H1 (cell line): ENCODE measurements at regions of chr6 and their contacts with region 1.

Region 1: GRCh38 chr6:32838114-32838958 is at the start of gene TAP2:
- DNase-seq: peak in 1 of 2 experiments; percentile 99
- H3K4me3 ChIP-seq: peak within 1 kb of the TSS; percentile 53 to 81 (median 68)
- H3K27ac ChIP-seq: no peak within 1 kb of the TSS
- H3K4me1 ChIP-seq: peaks cover 0 to 7% (median 4%) of the 10 kb centered on the region in 4 experiments; a peak in 5 of 7 replicates
- H3K27me3 ChIP-seq: peaks cover 0 to 7% (median 6%) of the 10 kb centered on the region in 4 experiments; a peak in 4 of 7 replicates
- CTCF ChIP-seq: peak; percentile 70 to 97 (median 95)
- EP300 ChIP-seq: no peak
- POLR2A ChIP-seq: peak in 1 of 2 experiments; percentile 62; a peak in 1 of 3 replicates
- RAD21 ChIP-seq: peak; percentile 92 to 94
- total RNA-seq, gene TAP2: 24.3 and 27.2 TPM in 2 replicates

Region 2: GRCh38 chr6:31197559-31198305 is 1640.6 kb before region 1 on chr6:
- CTCF ChIA-PET with region 1: no interaction called
- POLR2A ChIA-PET with region 1: no interaction called
- DNase-seq: peak in 1 of 2 experiments; percentile 73
- H3K4me3 ChIP-seq: peak overlapping the region; percentile 43 to 74 (median 70)
- H3K27ac ChIP-seq: no peak overlapping the region
- H3K4me1 ChIP-seq: peaks cover 0 to 6% (median 5%) of the 10 kb centered on the region in 4 experiments; a peak in 6 of 7 replicates
- H3K27me3 ChIP-seq: no peaks in the 10 kb centered on the region
- CTCF ChIP-seq: peak in 1 of 3 experiments; percentile 3; a peak in 1 of 4 replicates
- EP300 ChIP-seq: no peak
- POLR2A ChIP-seq: no peak
- RAD21 ChIP-seq: peak; percentile 1 to 11; a peak in 1 of 4 replicates

Region 3: DNA sequence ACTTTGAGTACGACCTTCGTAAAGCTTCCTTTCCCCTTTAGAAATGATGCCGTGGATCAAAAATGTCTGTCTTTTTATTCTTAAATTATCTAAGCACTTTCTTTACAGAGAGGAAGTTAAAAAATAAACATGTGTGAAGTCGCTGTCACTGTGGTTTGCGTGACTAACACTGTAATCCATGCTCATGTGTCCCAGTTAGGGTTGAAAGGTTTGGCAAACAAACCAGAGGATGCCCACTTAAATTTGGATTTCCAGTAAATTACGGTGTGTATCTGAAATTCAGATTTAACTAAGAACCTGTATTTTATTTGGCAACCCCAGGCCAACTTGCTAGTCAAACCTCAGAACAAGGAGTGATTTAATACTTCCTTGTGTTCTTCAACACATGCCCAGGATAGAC is 269.8 kb before region 1 on chr6:
- CTCF ChIA-PET with region 1: no interaction called
- POLR2A ChIA-PET with region 1: no interaction called
- DNase-seq: no peak
- H3K4me3 ChIP-seq: no peak overlapping the region
- H3K27ac ChIP-seq: no peak overlapping the region
- H3K4me1 ChIP-seq: no peaks in the 10 kb centered on the region
- H3K27me3 ChIP-seq: no peaks in the 10 kb centered on the region
- CTCF ChIP-seq: no peak
- EP300 ChIP-seq: no peak
- POLR2A ChIP-seq: no peak
- RAD21 ChIP-seq: no peak

Region 4: GRCh38 chr6:32785781-32786533 is 52.4 kb before region 1 on chr6:
- CTCF ChIA-PET with region 1: interaction called, 13 read pairs
- POLR2A ChIA-PET with region 1: no interaction called
- DNase-seq: peak in 1 of 2 experiments; percentile 49
- H3K4me3 ChIP-seq: no peak overlapping the region
- H3K27ac ChIP-seq: no peak overlapping the region
- H3K4me1 ChIP-seq: no peaks in the 10 kb centered on the region; a peak in 1 of 7 replicates
- H3K27me3 ChIP-seq: no peaks in the 10 kb centered on the region
- CTCF ChIP-seq: peak; percentile 15 to 75 (median 66)
- EP300 ChIP-seq: no peak
- POLR2A ChIP-seq: no peak
- RAD21 ChIP-seq: peak; percentile 86 to 88

Region 5: DNA sequence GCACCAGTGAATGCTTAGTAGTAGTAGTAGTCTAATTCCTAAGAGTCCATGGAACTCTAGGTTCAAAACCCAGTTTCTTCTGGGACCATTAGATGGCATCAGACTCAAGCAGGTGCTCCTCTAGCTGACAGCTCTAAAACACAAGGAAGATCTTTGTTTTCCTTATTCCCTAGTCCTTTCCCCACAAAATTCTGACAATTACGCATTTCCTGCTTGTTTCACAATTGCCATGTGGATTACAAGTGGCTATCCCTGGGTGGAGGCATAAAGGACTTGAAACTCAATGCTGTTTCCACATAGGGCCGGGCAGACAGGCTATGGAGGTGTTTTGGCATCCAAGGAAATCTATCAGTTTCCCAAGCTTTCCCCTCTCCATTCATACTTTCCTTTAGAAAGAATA is 12.4 kb before region 1 on chr6:
- CTCF ChIA-PET with region 1: interaction called, 37 read pairs
- POLR2A ChIA-PET with region 1: interaction called, 21 read pairs
- DNase-seq: no peak
- H3K4me3 ChIP-seq: no peak overlapping the region
- H3K27ac ChIP-seq: no peak overlapping the region
- H3K4me1 ChIP-seq: peaks cover 0 to 4% (median 0%) of the 10 kb centered on the region in 4 experiments; a peak in 1 of 7 replicates
- H3K27me3 ChIP-seq: no peaks in the 10 kb centered on the region; a peak in 1 of 7 replicates
- CTCF ChIP-seq: peak in 2 of 3 experiments; percentile 56 to 63; a peak in 3 of 4 replicates
- EP300 ChIP-seq: no peak
- POLR2A ChIP-seq: no peak
- RAD21 ChIP-seq: peak; percentile 73 to 83

Region 6: DNA sequence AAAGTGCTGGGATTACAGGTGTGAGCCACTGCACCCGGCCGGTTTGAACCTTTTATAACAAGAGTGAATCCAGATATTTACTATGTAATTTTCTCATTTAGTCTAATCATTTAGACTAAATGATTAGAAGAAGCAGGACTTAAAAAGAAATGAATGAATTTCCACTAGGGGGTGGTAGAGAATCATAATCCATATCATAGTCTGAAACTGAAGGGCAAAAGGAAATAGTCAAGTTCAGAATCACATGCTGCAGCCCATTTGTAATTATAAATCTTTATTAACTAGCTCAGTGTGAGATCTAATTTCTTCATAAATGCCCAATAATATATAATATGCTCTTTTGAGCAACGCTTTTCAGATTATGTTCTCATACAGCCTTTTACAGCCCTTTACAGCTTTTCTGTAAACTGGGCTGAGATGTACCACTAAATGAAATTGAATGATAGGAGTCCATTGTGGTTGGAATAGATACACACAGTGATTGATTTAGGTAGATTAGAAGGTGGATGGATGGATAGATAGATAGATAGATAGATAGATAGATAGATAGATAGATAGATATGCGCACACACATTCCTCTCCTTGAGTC is 47.5 kb after region 1 on chr6:
- CTCF ChIA-PET with region 1: interaction called, 12 read pairs
- POLR2A ChIA-PET with region 1: no interaction called
- DNase-seq: no peak
- H3K4me3 ChIP-seq: no peak overlapping the region
- H3K27ac ChIP-seq: no peak overlapping the region
- H3K4me1 ChIP-seq: no peaks in the 10 kb centered on the region
- H3K27me3 ChIP-seq: no peaks in the 10 kb centered on the region
- CTCF ChIP-seq: peak in 2 of 3 experiments; percentile 25 to 38; a peak in 2 of 4 replicates
- EP300 ChIP-seq: no peak
- POLR2A ChIP-seq: no peak
- RAD21 ChIP-seq: peak; percentile 63 to 67

Region 7: DNA sequence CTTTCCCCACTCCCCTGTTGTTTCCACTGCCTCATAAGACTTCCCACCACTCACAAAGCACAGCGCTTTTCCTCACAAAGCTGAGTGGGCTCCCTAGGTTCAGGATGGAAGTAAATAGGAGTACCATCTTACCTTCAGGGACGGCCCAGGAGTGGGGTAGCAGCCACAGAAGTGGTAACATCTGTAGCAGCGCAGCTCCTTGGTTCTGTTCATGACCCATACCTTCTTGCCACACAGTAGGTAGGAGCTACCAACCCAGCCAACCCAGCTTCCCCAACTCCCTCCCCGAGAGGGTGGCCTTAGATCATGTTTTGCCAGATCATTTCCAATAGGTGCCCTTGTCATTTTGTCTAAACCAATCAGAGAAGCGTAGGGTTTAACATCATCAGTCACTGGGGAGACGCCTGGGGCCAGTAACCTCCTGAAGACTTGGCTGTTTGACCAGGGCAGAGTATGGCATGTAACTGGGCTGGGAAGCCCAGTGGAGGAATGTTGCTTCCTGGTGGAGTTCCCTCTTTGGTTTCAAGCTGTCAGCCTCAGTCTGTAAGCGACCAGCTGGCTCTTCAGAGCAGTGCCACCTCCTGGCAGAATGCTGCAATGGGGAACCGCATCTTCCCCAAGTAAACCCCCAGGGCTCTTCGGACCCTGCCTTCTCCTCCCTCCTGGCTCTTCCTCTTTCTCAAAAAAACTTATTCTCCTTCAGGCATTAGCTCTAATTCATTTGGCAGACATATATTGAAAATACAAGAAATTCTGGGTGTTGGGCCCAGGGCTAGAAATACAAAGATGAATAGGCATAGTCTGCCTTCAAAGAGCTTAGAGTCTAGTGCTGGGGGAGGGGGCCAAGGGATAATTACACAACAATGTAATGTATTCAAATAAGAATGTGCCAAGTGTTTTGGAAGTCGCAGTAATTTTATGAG is 114.7 kb after region 1 on chr6 and contains the start of gene HLA-DMA:
- CTCF ChIA-PET with region 1: interaction called, 28 read pairs
- POLR2A ChIA-PET with region 1: no interaction called
- DNase-seq: peak; percentile 82 to 88
- H3K4me3 ChIP-seq: no peak within 1 kb of the TSS
- H3K27ac ChIP-seq: no peak within 1 kb of the TSS
- H3K4me1 ChIP-seq: peaks cover 0 to 13% (median 3%) of the 10 kb centered on the region in 4 experiments; a peak in 5 of 7 replicates
- H3K27me3 ChIP-seq: no peaks in the 10 kb centered on the region; a peak in 1 of 7 replicates
- CTCF ChIP-seq: peak; percentile 81 to 93 (median 82)
- EP300 ChIP-seq: no peak
- POLR2A ChIP-seq: no peak
- RAD21 ChIP-seq: peak; percentile 38 to 59
- total RNA-seq, gene HLA-DMA: 13.3 and 15.1 TPM in 2 replicates